Activated naive CD4-positive, alpha-beta T cell treated with anti-CD3 and anti-CD28 coated beads for 36 hours (primary cell): ENCODE measurements at regions of chr2 and their contacts with region 1.

Region 1: DNA sequence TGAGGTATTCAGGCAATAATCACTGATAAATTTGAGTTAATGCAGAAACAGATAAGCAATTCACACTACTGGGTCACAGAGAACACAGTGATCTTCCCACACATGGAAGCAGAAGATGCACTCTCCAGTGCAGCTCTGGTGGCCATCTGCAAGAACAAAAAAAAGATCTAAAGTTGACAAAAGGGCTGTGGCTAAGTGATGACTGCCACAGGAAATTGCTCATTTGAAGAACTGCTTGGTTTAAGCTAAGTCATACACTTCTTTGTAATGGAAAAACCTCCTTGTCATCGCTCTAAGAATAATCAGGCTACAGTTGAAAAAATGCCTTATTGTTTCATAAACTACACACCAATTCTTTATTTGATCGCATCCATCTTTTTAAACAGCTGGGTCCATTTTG is 115.1 kb downstream of the DTNB start:
- DNase-seq: peak; percentile 58
- H3K4me3 Mint-ChIP-seq: no peak overlapping the region
- H3K27ac Mint-ChIP-seq: peak overlapping the region; percentile 35
- H3K4me1 Mint-ChIP-seq: peaks cover 52% of the 10 kb centered on the region
- H3K27me3 Mint-ChIP-seq: no peaks in the 10 kb centered on the region

Region 2: DNA sequence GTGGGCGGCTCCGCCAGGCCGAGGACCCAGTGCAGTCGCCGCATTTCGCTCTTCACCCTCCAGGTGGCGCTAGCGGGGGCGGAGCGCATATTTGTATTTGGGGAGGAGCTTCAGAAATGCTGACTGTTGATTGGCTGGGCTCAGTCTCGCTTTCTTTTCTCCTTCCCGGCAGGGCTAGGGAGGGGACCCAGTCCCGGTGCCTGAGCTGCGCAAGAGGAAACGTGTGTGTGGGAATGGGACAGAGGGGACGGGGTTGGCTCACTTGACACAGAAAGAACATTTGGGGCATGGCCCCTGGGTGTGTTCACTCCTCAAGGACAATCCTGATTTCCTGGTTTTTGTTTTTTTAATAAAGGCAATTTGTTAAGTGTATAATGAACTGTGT is 196.2 kb before region 1 on chr2:
- CTCF ChIA-PET with region 1: no interaction called
- intact Hi-C with region 1: loop called (anchors 1 kb)
- DNase-seq: peak; percentile 98
- H3K4me3 Mint-ChIP-seq: peak overlapping the region; percentile 82
- H3K27ac Mint-ChIP-seq: peak overlapping the region; percentile 94
- H3K4me1 Mint-ChIP-seq: peaks cover 11% of the 10 kb centered on the region
- H3K27me3 Mint-ChIP-seq: no peaks in the 10 kb centered on the region

Region 3: GRCh38 chr2:25586726-25587144 is 28.5 kb after region 1 on chr2:
- CTCF ChIA-PET with region 1: no interaction called
- intact Hi-C with region 1: loop called (anchors 1 kb)
- DNase-seq: peak; percentile 60
- H3K4me3 Mint-ChIP-seq: no peak overlapping the region
- H3K27ac Mint-ChIP-seq: peak overlapping the region; percentile 54
- H3K4me1 Mint-ChIP-seq: peaks cover 17% of the 10 kb centered on the region
- H3K27me3 Mint-ChIP-seq: no peaks in the 10 kb centered on the region